AG04450 (cell line): ENCODE measurements at regions of chr12 and their contacts with region 1.

Region 1: DNA sequence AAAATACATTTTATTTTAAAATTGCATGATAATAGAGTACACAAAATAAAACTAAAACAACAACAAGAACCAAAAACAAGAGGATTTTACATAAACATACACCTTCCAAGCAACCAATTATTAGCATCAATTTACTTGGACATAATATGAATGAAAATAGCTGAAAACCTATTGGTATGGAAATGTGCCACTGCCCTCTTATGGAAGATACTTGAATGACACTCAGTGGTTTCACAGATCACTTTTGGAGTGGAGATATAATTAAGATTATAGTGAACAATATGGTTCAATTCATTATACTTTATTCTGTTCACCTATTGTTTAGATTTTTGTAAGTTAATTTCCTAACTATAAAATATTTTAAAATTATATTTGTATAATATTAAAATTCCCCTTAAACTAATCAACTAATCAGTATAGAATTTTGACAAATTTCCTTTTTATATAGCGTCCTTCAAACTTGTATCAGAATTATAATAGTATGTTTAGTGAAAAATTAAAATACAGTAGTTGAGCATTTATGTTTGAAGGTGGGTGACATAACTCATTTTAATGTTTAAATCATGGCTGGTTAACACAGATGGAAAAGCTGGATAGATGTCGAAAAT is 70.1 kb downstream of the SLC6A15 start:
- DNase-seq: peak; percentile 10
- H3K4me3 ChIP-seq: no peak overlapping the region
- H3K27ac ChIP-seq: no peak overlapping the region
- H3K27me3 ChIP-seq: no peaks in the 10 kb centered on the region
- CTCF ChIP-seq: peak; percentile 80

Region 2: GRCh38 chr12:84507956-84508850 is 334.3 kb before region 1 on chr12:
- CTCF ChIA-PET with region 1: interaction called, 11 read pairs
- POLR2A ChIA-PET with region 1: no interaction called
- DNase-seq: no peak
- H3K4me3 ChIP-seq: no peak overlapping the region
- H3K27ac ChIP-seq: peak overlapping the region; percentile 1
- H3K27me3 ChIP-seq: no peaks in the 10 kb centered on the region
- CTCF ChIP-seq: peak; percentile 69

Region 3: DNA sequence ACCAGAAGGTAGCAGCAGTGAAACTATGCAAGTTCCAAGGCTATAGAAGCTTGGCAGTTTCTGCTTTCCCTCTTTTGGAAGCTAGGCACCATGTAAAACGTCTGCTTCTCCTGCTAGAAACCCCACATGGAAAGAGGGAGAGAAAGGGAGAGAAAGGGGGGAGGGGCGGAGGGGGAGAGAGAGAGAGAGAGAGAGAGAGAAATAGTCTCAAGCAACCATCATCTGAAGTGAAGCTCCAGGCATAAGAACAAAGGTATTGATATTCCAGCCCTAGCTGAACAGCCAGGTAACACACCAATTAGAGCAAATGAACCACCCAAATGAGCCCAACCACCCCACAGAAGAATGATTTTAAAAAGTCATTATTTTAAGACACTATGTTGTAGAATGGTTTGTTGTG is 61.5 kb after region 1 on chr12:
- CTCF ChIA-PET with region 1: no interaction called
- POLR2A ChIA-PET with region 1: no interaction called
- DNase-seq: no peak
- H3K4me3 ChIP-seq: no peak overlapping the region
- H3K27ac ChIP-seq: no peak overlapping the region
- H3K27me3 ChIP-seq: no peaks in the 10 kb centered on the region
- CTCF ChIP-seq: no peak